ENCODE measurements at regions of chr5 and their contacts with region 1.

Region 1: GRCh38 chr5:54243473-54244080 is 66.8 kb downstream of the ARL15 start:
- DNase-seq: no peak
- ATAC-seq: peak; percentile 84
- H3K4me3 ChIP-seq: no peak overlapping the region
- H3K27ac ChIP-seq: no peak overlapping the region
- H3K4me1 ChIP-seq: no peaks in the 10 kb centered on the region
- H3K27me3 ChIP-seq: no peaks in the 10 kb centered on the region
- CTCF ChIP-seq: peak; percentile 57 to 72 (median 72); a peak in 5 of 6 replicates
- EP300 ChIP-seq: no peak
- POLR2A ChIP-seq: no peak
- RAD21 ChIP-seq: peak; percentile 86

Region 2: GRCh38 chr5:54030981-54031380 is 212.6 kb before region 1 on chr5:
- CTCF ChIA-PET with region 1: no interaction called
- POLR2A ChIA-PET with region 1: no interaction called
- RAD21 ChIA-PET with region 1: no interaction called
- SMC1A ChIA-PET with region 1: no interaction called
- in situ Hi-C with region 1: no loop called
- intact Hi-C with region 1: no loop called
- DNase-seq: no peak
- ATAC-seq: no peak
- H3K4me3 ChIP-seq: no peak overlapping the region
- H3K27ac ChIP-seq: no peak overlapping the region
- H3K4me1 ChIP-seq: no peaks in the 10 kb centered on the region
- H3K27me3 ChIP-seq: no peaks in the 10 kb centered on the region
- CTCF ChIP-seq: no peak
- EP300 ChIP-seq: no peak
- POLR2A ChIP-seq: no peak
- RAD21 ChIP-seq: no peak

Region 3: DNA sequence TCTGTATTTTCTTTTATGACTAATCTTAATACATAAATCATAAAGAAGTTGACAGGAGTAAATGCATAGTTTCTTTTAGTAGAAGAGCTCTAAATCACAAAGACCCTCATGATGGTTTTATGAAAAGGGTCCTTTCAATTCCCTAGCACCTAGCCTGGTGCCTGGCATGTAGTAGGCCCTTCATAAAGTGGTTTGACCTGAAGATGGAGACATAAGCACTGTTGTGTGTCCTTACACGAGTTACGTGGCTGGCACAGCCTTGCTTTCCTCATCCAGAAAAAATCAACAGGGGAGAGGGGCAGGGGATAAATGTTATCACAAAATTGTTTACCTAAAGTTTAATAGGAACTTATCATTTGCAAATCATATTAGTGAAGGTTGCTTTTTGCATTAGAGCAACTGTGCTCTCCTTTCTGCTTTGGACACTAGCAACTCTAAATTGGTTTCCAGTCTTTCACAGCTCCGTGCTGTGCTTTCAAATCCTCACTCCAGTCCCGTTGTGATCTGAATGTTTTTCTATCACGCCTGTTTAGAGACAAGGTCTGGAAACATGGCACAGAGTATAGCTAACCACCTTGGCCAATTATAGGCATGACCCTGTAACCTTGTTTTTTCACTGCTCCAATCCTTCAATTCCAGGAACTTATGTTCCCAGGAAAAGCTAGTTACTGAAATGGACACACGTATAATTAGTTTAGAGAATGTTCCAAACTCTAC is 11.1 kb after region 1 on chr5:
- CTCF ChIA-PET with region 1: interaction called, 28 read pairs
- POLR2A ChIA-PET with region 1: no interaction called
- RAD21 ChIA-PET with region 1: interaction called, 3 read pairs
- SMC1A ChIA-PET with region 1: interaction called, 12 read pairs
- in situ Hi-C with region 1: no loop called
- intact Hi-C with region 1: no loop called
- DNase-seq: no peak
- ATAC-seq: no peak
- H3K4me3 ChIP-seq: no peak overlapping the region
- H3K27ac ChIP-seq: no peak overlapping the region
- H3K4me1 ChIP-seq: peaks cover 3% of the 10 kb centered on the region
- H3K27me3 ChIP-seq: no peaks in the 10 kb centered on the region
- CTCF ChIP-seq: peak in 1 of 3 experiments; percentile 15; a peak in 1 of 6 replicates
- EP300 ChIP-seq: no peak
- POLR2A ChIP-seq: no peak
- RAD21 ChIP-seq: no peak

Region 4: DNA sequence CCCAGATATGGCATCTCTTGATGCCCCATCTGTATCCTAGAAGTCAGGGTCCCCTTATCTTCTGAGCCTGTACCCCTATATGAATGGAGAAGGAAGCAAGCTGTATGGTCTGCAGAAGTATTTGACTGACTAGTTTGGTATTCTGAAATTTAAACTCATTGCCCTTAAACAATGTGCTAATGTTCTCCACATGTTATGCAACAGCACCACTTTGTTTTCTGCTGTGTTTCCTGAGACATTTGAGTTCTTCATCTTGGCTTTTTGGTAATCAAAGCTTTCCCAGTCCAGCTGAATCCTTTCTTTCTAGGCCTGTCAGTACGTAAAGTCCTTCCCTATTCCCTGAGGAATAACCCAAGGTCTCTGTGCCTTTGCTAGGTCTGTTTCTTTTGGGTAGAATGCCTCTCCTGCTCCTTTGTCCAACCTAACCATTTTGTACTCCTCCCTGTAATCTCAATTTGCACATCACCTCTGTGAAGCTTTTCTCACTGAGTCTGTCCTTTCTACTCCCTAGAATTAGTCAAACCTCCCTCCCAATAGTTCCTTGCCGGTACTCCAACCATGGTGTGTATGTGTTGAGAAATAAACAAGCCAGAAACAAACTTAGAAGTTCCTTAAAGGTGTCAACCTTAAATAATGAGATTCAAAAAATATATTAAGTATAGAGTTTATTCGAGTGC is 139.8 kb after region 1 on chr5:
- CTCF ChIA-PET with region 1: interaction called, 15 read pairs
- POLR2A ChIA-PET with region 1: no interaction called
- RAD21 ChIA-PET with region 1: interaction called, 4 read pairs
- SMC1A ChIA-PET with region 1: interaction called, 3 read pairs
- in situ Hi-C with region 1: no loop called
- intact Hi-C with region 1: no loop called
- DNase-seq: no peak
- ATAC-seq: no peak
- H3K4me3 ChIP-seq: no peak overlapping the region
- H3K27ac ChIP-seq: no peak overlapping the region
- H3K4me1 ChIP-seq: no peaks in the 10 kb centered on the region
- H3K27me3 ChIP-seq: no peaks in the 10 kb centered on the region
- CTCF ChIP-seq: no peak
- EP300 ChIP-seq: no peak
- POLR2A ChIP-seq: no peak
- RAD21 ChIP-seq: no peak

Region 5: GRCh38 chr5:54443270-54443669 is 199.7 kb after region 1 on chr5:
- CTCF ChIA-PET with region 1: interaction called, 17 read pairs
- POLR2A ChIA-PET with region 1: no interaction called
- RAD21 ChIA-PET with region 1: interaction called, 3 read pairs
- SMC1A ChIA-PET with region 1: interaction called, 7 read pairs
- in situ Hi-C with region 1: no loop called
- intact Hi-C with region 1: no loop called
- DNase-seq: no peak
- ATAC-seq: peak; percentile 73
- H3K4me3 ChIP-seq: no peak overlapping the region
- H3K27ac ChIP-seq: no peak overlapping the region
- H3K4me1 ChIP-seq: peaks cover 21% of the 10 kb centered on the region
- H3K27me3 ChIP-seq: no peaks in the 10 kb centered on the region; a peak in 2 of 4 replicates
- CTCF ChIP-seq: peak; percentile 37 to 51 (median 43)
- EP300 ChIP-seq: no peak
- POLR2A ChIP-seq: no peak
- RAD21 ChIP-seq: peak; percentile 56; the same call in 1 of the 2 replicates